WTC11 (cell line): ENCODE measurements at regions of chr5 and their contacts with region 1.

Region 1: GRCh38 chr5:79133657-79134451 is 22.2 kb downstream of the BHMT start:
- DNase-seq: peak; percentile 76
- ATAC-seq: peak; percentile 79
- H3K4me3 Mint-ChIP-seq: peak overlapping the region; percentile 73
- H3K27ac Mint-ChIP-seq: peak overlapping the region; percentile 94
- H3K4me1 Mint-ChIP-seq: peaks cover 23% of the 10 kb centered on the region
- H3K27me3 Mint-ChIP-seq: no peaks in the 10 kb centered on the region
- CTCF ChIP-seq: peak; percentile 24; the same call in 1 of the 2 replicates

Region 2: DNA sequence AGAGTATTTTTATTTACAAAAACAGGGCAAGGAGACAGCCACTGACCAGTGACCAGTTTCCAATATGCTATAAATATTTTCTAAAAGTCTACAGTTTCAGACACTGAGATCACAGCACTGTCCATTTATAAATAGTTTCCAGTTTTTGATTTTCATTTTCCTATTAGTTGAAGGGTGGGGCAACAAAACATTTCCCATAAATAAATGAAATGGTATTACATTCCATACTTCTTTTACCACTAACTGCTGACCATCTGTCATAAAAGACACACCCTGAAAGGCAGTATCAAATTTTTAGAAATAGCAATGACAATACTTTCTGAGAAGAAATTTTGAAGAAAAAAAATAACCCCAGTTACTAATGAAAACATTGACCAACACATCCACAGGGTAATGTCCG is 275.5 kb before region 1 on chr5:
- CTCF ChIA-PET with region 1: no interaction called
- POLR2A ChIA-PET with region 1: no interaction called
- DNase-seq: no peak
- ATAC-seq: no peak
- H3K4me3 Mint-ChIP-seq: no peak overlapping the region
- H3K27ac Mint-ChIP-seq: no peak overlapping the region
- H3K4me1 Mint-ChIP-seq: no peaks in the 10 kb centered on the region
- H3K27me3 Mint-ChIP-seq: peaks cover 7% of the 10 kb centered on the region
- CTCF ChIP-seq: no peak

Region 3: DNA sequence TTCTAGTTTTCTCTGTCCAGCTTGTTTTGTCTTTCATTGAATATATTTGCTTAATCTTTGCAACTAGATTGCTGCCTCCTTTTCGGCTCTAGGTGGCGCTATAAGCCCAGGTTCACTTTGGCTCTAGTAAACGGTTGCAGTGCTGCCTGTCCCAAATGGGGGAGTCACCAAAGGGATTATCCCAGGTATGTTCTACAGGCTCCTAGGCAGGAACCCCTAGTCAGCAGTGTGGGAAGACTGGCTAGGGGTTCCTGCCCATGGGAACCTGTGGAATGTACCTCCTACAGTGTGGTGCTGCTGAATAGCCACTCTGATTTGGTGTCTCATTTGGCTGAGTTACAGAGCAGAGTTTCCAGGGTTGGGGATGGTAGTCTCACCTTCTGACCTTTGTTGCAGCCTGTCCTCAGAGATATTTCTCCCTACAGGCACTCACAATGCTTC is 233.9 kb before region 1 on chr5:
- CTCF ChIA-PET with region 1: interaction called, 15 read pairs
- POLR2A ChIA-PET with region 1: no interaction called
- DNase-seq: peak; percentile 74
- ATAC-seq: peak; percentile 98
- H3K4me3 Mint-ChIP-seq: no peak overlapping the region
- H3K27ac Mint-ChIP-seq: no peak overlapping the region
- H3K4me1 Mint-ChIP-seq: peaks cover 2% of the 10 kb centered on the region
- H3K27me3 Mint-ChIP-seq: no peaks in the 10 kb centered on the region
- CTCF ChIP-seq: peak; percentile 79

Region 4: GRCh38 chr5:79001471-79001870 is 132.4 kb before region 1 on chr5:
- CTCF ChIA-PET with region 1: no interaction called
- POLR2A ChIA-PET with region 1: no interaction called
- DNase-seq: no peak
- ATAC-seq: no peak
- H3K4me3 Mint-ChIP-seq: no peak overlapping the region
- H3K27ac Mint-ChIP-seq: no peak overlapping the region
- H3K4me1 Mint-ChIP-seq: no peaks in the 10 kb centered on the region
- H3K27me3 Mint-ChIP-seq: no peaks in the 10 kb centered on the region
- CTCF ChIP-seq: no peak

Region 5: DNA sequence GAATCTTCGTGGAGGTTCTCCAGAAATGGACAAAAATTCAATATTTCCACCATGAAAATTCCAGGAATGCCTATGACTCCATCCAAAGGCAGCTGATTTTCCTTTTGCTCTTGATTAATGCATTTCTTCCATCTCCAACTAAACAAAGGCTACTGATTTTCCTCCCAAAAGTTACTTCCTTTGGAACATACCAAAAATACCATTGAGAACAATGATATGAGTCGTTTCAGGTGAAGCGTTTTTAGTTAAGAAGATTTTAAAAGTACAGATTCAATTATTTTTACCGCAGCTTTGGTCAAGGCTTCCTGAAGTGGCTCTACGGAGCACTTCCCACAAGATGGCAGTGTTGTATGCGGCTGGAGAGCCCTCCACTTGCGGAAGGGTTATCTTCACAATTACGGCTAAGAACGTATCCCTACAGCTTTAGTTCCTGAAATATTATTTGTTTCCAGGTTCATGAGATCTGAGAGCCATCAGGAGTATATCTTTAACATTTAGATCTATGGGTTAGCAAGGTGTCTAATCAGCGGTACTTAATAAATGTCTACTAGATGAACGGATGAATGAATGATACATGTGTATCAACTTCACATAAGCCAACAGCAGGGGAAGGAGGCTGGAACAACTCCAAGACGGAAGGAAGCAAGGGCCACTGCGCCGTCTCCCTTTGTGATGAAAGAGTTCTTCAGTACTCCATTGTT is 112.8 kb before region 1 on chr5:
- CTCF ChIA-PET with region 1: interaction called, 358 read pairs
- POLR2A ChIA-PET with region 1: no interaction called
- DNase-seq: peak; percentile 64
- ATAC-seq: peak; percentile 83
- H3K4me3 Mint-ChIP-seq: peak overlapping the region; percentile 48
- H3K27ac Mint-ChIP-seq: no peak overlapping the region
- H3K4me1 Mint-ChIP-seq: peaks cover 20% of the 10 kb centered on the region
- H3K27me3 Mint-ChIP-seq: no peaks in the 10 kb centered on the region; the same call in 1 of the 2 replicates
- CTCF ChIP-seq: peak; percentile 51; the same call in 1 of the 2 replicates

Region 6: GRCh38 chr5:79074641-79075040 is 59.2 kb before region 1 on chr5:
- CTCF ChIA-PET with region 1: interaction called, 11 read pairs
- POLR2A ChIA-PET with region 1: no interaction called
- DNase-seq: no peak
- ATAC-seq: no peak
- H3K4me3 Mint-ChIP-seq: no peak overlapping the region
- H3K27ac Mint-ChIP-seq: no peak overlapping the region
- H3K4me1 Mint-ChIP-seq: 0 out of 2 replicates have a peak, but pooled peaks cover 4% of the 10 kb centered on the region
- H3K27me3 Mint-ChIP-seq: no peaks in the 10 kb centered on the region
- CTCF ChIP-seq: no peak

Region 7: DNA sequence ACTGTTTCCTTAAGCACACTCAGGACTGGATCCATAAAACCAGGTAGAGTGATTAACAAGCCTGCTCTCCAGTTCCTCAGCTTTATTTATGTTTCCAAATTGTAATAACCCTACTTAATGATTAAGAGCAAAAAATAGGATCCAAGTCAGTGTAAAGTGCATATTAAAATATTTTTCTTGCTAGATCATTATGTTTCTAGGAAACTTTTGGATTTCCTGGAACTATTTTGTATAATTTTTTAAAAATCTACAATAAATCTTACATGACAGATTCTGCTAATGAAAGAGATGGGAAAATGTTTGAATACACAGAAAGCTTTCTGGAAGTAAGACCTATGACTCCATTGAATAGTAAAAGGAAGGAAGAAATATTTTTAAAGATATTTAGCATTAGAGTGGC is 13.2 kb after region 1 on chr5:
- CTCF ChIA-PET with region 1: interaction called, 26 read pairs
- POLR2A ChIA-PET with region 1: no interaction called
- DNase-seq: no peak
- ATAC-seq: no peak
- H3K4me3 Mint-ChIP-seq: no peak overlapping the region
- H3K27ac Mint-ChIP-seq: no peak overlapping the region
- H3K4me1 Mint-ChIP-seq: peaks cover 20% of the 10 kb centered on the region
- H3K27me3 Mint-ChIP-seq: no peaks in the 10 kb centered on the region
- CTCF ChIP-seq: no peak

Region 8: DNA sequence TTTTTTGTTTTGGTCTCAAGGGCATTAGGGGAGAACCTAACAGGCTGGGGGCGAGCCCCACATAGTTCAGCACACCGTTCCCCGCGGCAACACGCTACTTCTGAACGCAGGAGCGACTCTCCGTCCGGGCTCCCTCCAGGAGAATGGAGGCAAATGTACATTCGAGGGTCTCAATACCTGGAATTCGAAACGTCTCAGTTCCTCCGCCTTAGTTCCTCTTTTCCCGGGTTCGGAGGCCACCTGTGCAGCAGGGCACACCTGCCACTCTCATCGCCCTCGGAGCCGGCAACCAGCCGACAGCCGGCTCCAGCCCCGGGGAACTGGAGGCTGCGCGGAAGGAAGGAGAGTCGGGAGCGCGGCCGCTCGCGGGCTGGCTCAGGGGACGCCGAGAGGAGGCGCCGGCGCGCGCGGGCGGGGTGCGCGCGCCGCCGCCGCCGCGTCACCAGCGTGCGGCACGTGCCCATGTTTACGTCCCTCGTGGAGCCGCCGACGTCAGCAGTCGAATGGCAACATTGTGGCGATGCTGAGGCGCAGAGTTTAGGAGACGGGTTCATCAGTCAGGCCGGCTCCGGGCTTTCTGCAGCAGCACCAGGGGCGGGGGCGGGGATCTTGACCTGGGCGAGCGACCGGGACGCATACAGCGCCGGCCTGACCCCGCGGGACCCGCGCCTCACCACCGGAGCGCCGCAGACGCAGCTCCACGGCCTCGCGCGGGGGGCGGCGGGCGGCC is 101.9 kb after region 1 on chr5 and contains the start of gene JMY:
- CTCF ChIA-PET with region 1: interaction called, 15 read pairs
- POLR2A ChIA-PET with region 1: no interaction called
- DNase-seq: peak; percentile 83
- ATAC-seq: peak; percentile 82
- H3K4me3 Mint-ChIP-seq: peak within 1 kb of the TSS; percentile 94
- H3K27ac Mint-ChIP-seq: peak within 1 kb of the TSS; percentile 87
- H3K4me1 Mint-ChIP-seq: peaks cover 23% of the 10 kb centered on the region
- H3K27me3 Mint-ChIP-seq: peaks cover 4% of the 10 kb centered on the region
- CTCF ChIP-seq: no peak
- total RNA-seq, gene JMY: 12.4 to 12.5 TPM (median 12.4 TPM) in 3 replicates